Left cardiac atrium (tissue), 4 donors: ENCODE measurements at regions of chr20 and their contacts with region 1.

Region 1: DNA sequence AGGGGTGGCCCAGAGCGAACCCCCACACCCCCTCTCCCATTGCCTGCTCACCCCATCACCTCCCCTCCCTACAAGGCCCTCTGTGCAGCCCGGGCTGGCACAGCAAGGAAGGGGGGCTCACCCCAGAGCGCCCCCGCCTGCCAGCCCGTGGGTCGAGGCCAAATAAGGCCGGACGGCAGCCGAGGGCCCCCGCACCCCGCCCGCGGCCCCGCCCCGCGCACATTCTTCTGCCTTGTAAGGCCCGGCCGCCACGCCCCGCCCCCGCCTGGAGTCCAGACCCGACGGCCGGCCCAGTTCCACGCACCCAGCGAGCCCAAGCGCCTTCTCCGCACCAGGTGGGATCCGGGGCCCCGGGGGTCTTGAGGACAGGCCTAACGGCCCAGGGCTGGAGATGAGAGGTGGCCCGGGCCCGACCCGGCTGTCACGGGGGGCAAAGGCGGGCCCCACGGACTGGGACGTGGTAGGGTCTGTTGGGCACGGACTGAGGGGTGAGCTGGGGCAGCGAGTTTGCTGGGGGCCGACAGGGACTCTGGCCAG is at the start of gene MYL9:
- DNase-seq: peak; percentile 96
- ATAC-seq: peak; percentile 86 to 87
- total RNA-seq, gene MYL9: 1,946 to 2,055 TPM

Region 2: GRCh38 chr20:36465109-36466080 is 75.9 kb before region 1 on chr20:
- intact Hi-C with region 1: loop called in 1 of 2 experiments (anchors 5 kb)
- DNase-seq: peak; percentile 72
- ATAC-seq: peak in 1 of 2 donors; percentile 15

Region 3: GRCh38 chr20:36481381-36482043 is 59.8 kb before region 1 on chr20:
- intact Hi-C with region 1: loop called in 1 of 2 experiments (anchors 5 kb)
- DNase-seq: no peak
- ATAC-seq: no peak